HAP-1 (cell line): ENCODE measurements at regions of chr1 and their contacts with region 1.

Region 1: DNA sequence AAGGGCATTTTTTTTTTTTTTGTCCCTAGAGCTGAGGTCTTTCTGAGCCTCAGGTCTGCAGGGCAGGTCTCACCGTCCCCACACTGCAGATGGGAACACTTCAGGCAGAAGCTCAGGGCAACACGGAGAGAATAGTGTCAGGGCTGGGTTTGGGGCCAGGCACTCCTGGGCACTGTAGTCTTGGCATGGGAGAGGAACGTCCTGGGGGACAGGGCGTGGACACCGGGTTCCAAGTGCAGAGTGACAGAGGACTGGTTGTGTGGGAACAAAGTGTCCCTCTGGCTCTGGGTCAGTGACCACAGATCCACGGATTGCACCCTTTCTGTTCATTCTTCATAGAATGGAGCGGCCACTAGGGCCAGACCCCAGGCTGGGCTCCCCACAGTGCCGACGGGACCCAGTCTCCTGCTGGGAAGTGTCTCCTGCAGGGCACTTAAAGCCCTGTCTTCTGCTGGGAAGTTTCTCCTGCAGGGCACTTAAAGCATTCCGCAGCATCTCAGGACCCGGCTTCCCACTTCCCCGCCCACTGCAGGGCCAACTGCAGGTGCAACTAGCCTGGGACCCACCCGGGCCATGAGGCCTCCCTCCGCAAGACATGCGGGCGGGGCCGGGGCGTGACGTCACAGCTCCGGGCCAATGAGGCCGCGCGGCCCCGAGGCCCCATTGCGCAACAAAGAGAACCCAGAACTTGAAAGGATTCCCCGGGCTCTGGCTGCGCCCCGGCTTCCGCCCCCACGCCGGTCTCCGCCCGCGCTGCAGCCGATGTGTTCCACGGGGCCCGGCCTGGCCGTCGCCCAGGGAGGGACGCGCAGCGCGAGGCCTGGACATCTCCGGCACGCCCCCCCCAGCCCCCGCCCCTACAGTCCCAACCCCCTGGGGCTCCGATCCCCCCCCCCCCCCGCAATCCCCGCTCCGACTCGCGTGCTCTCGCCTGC is 1.1 kb downstream of the GPR153 start:
- DNase-seq: peak; percentile 78 to 90
- H3K4me3 ChIP-seq: peak overlapping the region; percentile 53
- H3K4me1 ChIP-seq: peaks cover 4% of the 10 kb centered on the region
- H3K27me3 ChIP-seq: no peaks in the 10 kb centered on the region

Region 2: DNA sequence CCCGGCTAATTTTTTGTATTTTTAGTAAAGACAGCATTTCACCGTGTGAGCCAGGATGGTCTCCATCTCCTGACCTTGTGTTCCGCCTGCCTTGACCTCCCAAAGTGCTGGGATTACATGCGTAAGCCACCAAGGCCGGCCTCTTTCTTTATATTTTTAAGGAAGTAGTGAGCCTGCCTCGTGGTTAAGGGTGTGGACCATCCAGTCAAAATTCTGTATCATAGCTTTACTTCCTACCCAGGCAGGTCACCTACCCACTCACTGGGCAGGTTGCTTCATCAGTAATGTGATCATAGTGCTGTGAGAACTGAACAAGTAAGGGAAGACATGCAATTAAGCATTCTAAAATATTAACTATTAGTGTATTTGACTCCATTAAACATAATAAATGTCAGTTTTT is 141.9 kb after region 1 on chr1:
- in situ Hi-C with region 1: loop called (anchors 10 kb)
- DNase-seq: no peak
- H3K4me3 ChIP-seq: no peak overlapping the region
- H3K4me1 ChIP-seq: no peaks in the 10 kb centered on the region; the same call in 1 of the 2 replicates
- H3K27me3 ChIP-seq: no peaks in the 10 kb centered on the region

Region 3: DNA sequence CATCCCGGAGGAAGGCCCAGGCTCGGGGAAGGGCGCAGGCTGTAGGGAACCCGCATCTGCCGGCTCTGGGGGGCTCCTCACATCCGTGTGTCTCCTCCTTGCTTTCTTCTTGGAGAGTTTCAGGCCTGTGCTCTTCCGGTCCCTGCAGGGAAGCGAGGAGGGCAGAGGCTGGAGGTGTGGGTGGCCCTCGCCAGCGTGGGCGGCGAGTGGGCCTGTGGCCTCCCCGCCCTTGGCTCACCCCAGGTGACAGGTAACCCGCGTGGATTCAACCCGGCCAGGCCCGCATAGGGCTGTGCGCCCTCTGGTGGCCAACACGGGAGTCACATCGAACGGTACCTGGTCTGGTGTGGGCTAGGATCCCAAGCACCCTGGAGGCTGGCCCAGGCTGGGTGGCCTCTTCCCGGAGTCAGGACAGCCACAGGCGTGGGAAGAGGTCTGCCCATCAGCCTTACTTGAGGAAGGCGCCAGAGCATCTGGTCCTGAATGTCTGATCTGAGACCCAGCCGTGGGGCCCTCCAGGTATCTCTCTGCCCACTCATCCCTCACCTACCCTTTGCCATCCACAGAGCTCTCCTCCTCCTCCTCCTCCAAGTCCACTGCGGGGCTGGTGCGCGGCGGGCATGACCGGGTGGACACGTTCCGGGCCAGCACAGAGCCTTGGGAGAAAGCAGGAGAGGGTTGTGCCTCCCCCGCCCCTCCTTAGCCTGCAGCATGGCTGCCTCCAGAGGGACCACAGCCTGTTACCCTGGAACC is 215.8 kb after region 1 on chr1:
- in situ Hi-C with region 1: loop called (anchors 10 kb)
- DNase-seq: peak; percentile 13 to 79
- H3K4me3 ChIP-seq: no peak overlapping the region
- H3K4me1 ChIP-seq: no peaks in the 10 kb centered on the region
- H3K27me3 ChIP-seq: no peaks in the 10 kb centered on the region

Region 4: GRCh38 chr1:7110321-7110720 is 850.6 kb after region 1 on chr1:
- in situ Hi-C with region 1: no loop called
- DNase-seq: no peak
- H3K4me3 ChIP-seq: no peak overlapping the region
- H3K4me1 ChIP-seq: no peaks in the 10 kb centered on the region
- H3K27me3 ChIP-seq: peaks cover 5% of the 10 kb centered on the region; the same call in 1 of the 2 replicates